Right lobe of liver (tissue), 6 donors: ENCODE measurements at regions of chr1 and their contacts with region 1.

Region 1: GRCh38 chr1:55277377-55278130 is 62.4 kb upstream of the USP24 start:
- DNase-seq: peak; percentile 75 to 80 (median 80)
- ATAC-seq: peak; percentile 97 to 98 (median 98)
- H3K4me3 ChIP-seq: no peak overlapping the region
- H3K27ac ChIP-seq: no peak overlapping the region
- H3K4me1 ChIP-seq: peaks cover 0 to 4% (median 0%) of the 10 kb centered on the region in 4 donors
- H3K27me3 ChIP-seq: no peaks in the 10 kb centered on the region
- CTCF ChIP-seq: peak; percentile 78 to 88 (median 86)
- POLR2A ChIP-seq: no peak

Region 2: DNA sequence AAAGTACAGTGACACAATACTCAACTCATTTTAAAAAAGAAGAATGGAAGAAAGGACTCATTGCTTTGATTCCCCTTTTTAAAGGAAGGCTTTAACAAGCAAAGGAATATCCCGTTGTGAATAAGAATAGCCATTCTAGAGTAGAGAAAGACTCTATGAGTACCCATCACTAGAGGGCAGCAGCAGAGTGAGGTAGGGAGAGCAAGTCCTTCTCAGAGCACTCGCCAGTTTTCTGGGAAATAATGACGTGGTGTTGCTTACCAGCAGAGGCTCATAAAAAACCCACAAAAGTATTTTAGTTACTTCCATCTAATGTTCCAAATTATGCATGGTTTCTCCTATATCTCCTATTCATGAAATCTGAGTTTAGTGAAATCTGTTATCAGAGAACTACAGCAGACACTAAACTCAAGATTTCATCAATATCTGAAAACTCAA is 137.0 kb before region 1 on chr1:
- intact Hi-C with region 1: loop called in 1 of 2 experiments (anchors 5 kb)
- DNase-seq: peak; percentile 28 to 61 (median 53)
- ATAC-seq: peak; percentile 97 to 99 (median 98)
- H3K4me3 ChIP-seq: no peak overlapping the region
- H3K27ac ChIP-seq: no peak overlapping the region
- H3K4me1 ChIP-seq: no peaks in the 10 kb centered on the region
- H3K27me3 ChIP-seq: no peaks in the 10 kb centered on the region
- CTCF ChIP-seq: peak; percentile 79 to 83 (median 81)
- POLR2A ChIP-seq: no peak